Mammary epithelial cell (primary cell): ENCODE measurements at regions of chr4 and their contacts with region 1.

Region 1: GRCh38 chr4:99382745-99383360 is 30.3 kb upstream of the ADH1C start:
- DNase-seq: no peak
- H3K4me3 ChIP-seq: no peak overlapping the region
- H3K27ac ChIP-seq: no peak overlapping the region
- H3K4me1 ChIP-seq: no peaks in the 10 kb centered on the region
- H3K27me3 ChIP-seq: no peaks in the 10 kb centered on the region
- CTCF ChIP-seq: no peak

Region 2: GRCh38 chr4:99362768-99363167 is 20.1 kb before region 1 on chr4:
- CTCF ChIA-PET with region 1: interaction called, 14 read pairs
- dilution Hi-C with region 1: no loop called
- in situ Hi-C with region 1: no loop called
- intact Hi-C with region 1: no loop called
- DNase-seq: no peak
- H3K4me3 ChIP-seq: no peak overlapping the region
- H3K27ac ChIP-seq: no peak overlapping the region
- H3K4me1 ChIP-seq: no peaks in the 10 kb centered on the region
- H3K27me3 ChIP-seq: no peaks in the 10 kb centered on the region
- CTCF ChIP-seq: no peak